ENCODE measurements at regions of chr5 and their contacts with region 1.

Region 1: DNA sequence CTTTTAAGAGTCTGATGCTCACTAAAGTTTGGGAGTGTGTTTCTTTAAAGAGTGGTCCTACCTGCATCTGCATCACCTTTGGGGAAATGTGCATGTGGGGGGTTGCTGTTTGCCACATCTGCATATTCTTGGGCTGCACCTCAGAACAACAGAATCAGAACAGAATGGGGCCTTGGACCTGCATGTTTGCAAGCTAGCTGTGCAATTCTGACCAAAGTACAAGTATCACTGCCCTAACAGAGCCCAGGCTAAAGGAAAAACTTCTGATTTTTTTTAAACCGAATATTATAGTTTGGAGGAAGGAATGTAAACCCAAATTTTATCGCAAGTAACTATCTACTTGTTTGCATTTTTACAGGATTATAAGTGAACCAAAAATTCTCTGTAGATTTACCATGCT is 34.2 kb upstream of the PRLR start:
- DNase-seq: no peak
- ATAC-seq: no peak
- H3K4me3 ChIP-seq: no peak overlapping the region
- H3K27ac ChIP-seq: no peak overlapping the region
- H3K4me1 ChIP-seq: no peaks in the 10 kb centered on the region
- H3K27me3 ChIP-seq: no peaks in the 10 kb centered on the region
- CTCF ChIP-seq: no peak
- EP300 ChIP-seq: no peak
- POLR2A ChIP-seq: no peak
- RAD21 ChIP-seq: no peak

Region 2: DNA sequence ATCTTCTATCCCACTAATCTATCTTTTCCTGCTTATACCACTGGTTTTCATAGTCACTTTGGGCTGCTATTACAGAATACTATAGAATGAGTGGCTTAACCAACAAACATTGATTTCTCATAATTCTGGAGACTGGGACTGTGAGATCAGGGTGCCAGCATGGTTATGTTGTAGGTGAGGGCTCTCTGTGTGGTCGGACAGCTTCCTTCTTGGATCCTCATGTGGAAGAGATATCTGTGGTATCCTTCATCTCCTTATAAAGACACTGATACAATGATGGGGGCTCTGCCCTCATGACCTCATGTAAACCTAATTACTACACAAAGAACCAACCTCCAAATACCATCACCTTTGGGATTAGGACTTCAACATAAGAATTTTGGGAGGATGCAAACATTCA is 20.4 kb before region 1 on chr5:
- CTCF ChIA-PET with region 1: no interaction called
- POLR2A ChIA-PET with region 1: interaction called, 3 read pairs
- in situ Hi-C with region 1: no loop called
- intact Hi-C with region 1: loop called (anchors 1 kb)
- DNase-seq: no peak
- ATAC-seq: no peak
- H3K4me3 ChIP-seq: no peak overlapping the region
- H3K27ac ChIP-seq: no peak overlapping the region
- H3K4me1 ChIP-seq: no peaks in the 10 kb centered on the region
- H3K27me3 ChIP-seq: no peaks in the 10 kb centered on the region
- CTCF ChIP-seq: no peak
- EP300 ChIP-seq: no peak
- POLR2A ChIP-seq: no peak
- RAD21 ChIP-seq: no peak